PC-3 (cell line): ENCODE measurements at regions of chr1 and their contacts with region 1.

Region 1: GRCh38 chr1:203625628-203626019 is 1.0 kb upstream of the ATP2B4 start:
- DNase-seq: peak; percentile 73
- ATAC-seq: peak; percentile 44
- H3K4me3 ChIP-seq: no peak overlapping the region
- H3K27ac ChIP-seq: peak overlapping the region; percentile 61
- H3K4me1 ChIP-seq: peaks cover 27% of the 10 kb centered on the region
- H3K27me3 ChIP-seq: no peaks in the 10 kb centered on the region
- CTCF ChIP-seq: peak; percentile 64

Region 2: GRCh38 chr1:202661123-202661845 is 964.3 kb before region 1 on chr1:
- CTCF ChIA-PET with region 1: no interaction called
- POLR2A ChIA-PET with region 1: no interaction called
- intact Hi-C with region 1: no loop called
- DNase-seq: peak; percentile 30
- ATAC-seq: peak; percentile 46; the same call in 1 of the 2 replicates
- H3K4me3 ChIP-seq: no peak overlapping the region
- H3K27ac ChIP-seq: no peak overlapping the region
- H3K4me1 ChIP-seq: no peaks in the 10 kb centered on the region
- H3K27me3 ChIP-seq: no peaks in the 10 kb centered on the region
- CTCF ChIP-seq: peak; percentile 41

Region 3: GRCh38 chr1:203512830-203513611 is 112.6 kb before region 1 on chr1:
- CTCF ChIA-PET with region 1: interaction called, 3 read pairs
- POLR2A ChIA-PET with region 1: interaction called, 4 read pairs
- intact Hi-C with region 1: loop called (anchors 2 kb)
- DNase-seq: peak; percentile 98
- ATAC-seq: peak; percentile 76
- H3K4me3 ChIP-seq: peak overlapping the region; percentile 34
- H3K27ac ChIP-seq: peak overlapping the region; percentile 99
- H3K4me1 ChIP-seq: peaks cover 52% of the 10 kb centered on the region
- H3K27me3 ChIP-seq: no peaks in the 10 kb centered on the region
- CTCF ChIP-seq: no peak

Region 4: GRCh38 chr1:203572134-203572625 is 53.4 kb before region 1 on chr1:
- CTCF ChIA-PET with region 1: no interaction called
- POLR2A ChIA-PET with region 1: no interaction called
- intact Hi-C with region 1: no loop called
- DNase-seq: no peak
- ATAC-seq: no peak
- H3K4me3 ChIP-seq: no peak overlapping the region
- H3K27ac ChIP-seq: no peak overlapping the region
- H3K4me1 ChIP-seq: peaks cover 12% of the 10 kb centered on the region
- H3K27me3 ChIP-seq: no peaks in the 10 kb centered on the region
- CTCF ChIP-seq: no peak

Region 5: DNA sequence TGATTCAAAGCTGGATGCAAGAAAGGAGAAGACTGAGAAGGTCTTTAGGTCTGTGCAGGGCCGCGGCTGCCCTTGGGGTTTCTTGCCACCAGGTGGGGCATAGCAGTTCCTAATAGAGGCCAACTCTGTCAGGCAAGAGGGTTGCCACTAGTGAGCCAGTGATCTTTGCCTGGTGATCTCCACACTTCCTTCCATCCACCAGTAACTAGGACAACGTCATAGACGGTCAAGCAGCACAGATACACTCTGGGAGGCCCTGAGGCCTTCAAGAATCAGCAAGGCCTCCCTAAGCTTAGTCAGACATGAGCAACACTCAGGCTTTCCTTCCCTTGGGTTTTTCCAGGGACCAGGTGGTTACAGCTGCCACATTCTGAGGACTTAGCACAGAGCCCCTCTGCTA is 31.9 kb before region 1 on chr1:
- CTCF ChIA-PET with region 1: interaction called, 10 read pairs
- POLR2A ChIA-PET with region 1: no interaction called
- intact Hi-C with region 1: no loop called
- DNase-seq: peak; percentile 69
- ATAC-seq: peak; percentile 25
- H3K4me3 ChIP-seq: no peak overlapping the region
- H3K27ac ChIP-seq: no peak overlapping the region
- H3K4me1 ChIP-seq: peaks cover 36% of the 10 kb centered on the region
- H3K27me3 ChIP-seq: no peaks in the 10 kb centered on the region
- CTCF ChIP-seq: peak; percentile 62

Region 6: GRCh38 chr1:203607533-203607873 is 18.1 kb before region 1 on chr1:
- CTCF ChIA-PET with region 1: interaction called, 5 read pairs
- POLR2A ChIA-PET with region 1: interaction called, 40 read pairs
- intact Hi-C with region 1: loop called (anchors 2 kb)
- DNase-seq: no peak
- ATAC-seq: no peak
- H3K4me3 ChIP-seq: no peak overlapping the region
- H3K27ac ChIP-seq: peak overlapping the region; percentile 61
- H3K4me1 ChIP-seq: peaks cover 19% of the 10 kb centered on the region
- H3K27me3 ChIP-seq: no peaks in the 10 kb centered on the region
- CTCF ChIP-seq: no peak

Region 7: DNA sequence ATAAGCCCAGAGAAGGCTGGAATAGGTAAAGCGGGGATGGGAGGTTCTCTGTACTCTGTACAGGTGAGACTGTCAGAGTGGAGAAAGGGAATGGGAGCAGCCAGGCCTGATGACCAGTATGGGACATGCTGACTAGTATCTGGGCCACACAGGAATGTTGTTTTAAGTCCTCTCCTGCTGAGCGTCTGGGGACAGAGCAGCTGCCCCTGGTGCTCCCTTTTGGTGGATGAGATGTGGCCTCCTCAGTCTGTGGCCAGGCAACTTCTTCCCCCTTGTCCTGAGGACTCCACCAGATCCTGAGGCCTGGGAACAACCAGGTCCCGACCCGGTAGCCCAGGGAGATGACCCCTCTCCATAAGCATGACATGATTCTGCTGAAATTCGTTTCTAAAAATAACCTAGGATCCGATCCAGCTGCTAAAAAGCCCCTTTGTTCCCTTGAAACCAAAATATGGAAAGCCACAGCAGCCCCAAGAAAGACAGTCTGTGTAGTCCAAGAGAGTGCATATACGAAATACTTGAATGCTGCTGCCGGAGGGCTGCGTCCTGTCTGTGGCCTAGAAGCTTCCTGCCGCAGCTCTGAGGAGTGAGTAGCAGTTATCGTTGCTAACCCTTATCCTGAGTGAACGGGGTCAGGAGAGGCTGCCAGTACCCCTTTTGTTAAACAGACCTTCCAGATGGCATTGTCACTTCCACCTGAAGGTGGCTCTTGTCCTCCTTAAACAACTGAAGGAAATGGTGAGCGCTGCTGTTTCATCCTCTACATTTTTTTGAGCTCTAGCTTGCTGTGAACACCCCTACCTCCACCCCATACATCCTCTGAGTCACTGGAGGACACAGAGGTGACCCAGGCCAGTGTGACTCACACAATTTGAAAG is 48.2 kb after region 1 on chr1:
- CTCF ChIA-PET with region 1: interaction called, 18 read pairs
- POLR2A ChIA-PET with region 1: interaction called, 4 read pairs
- intact Hi-C with region 1: loop called (anchors 5 kb)
- DNase-seq: peak; percentile 98
- ATAC-seq: peak; percentile 91
- H3K4me3 ChIP-seq: peak overlapping the region; percentile 6; the same call in 1 of the 2 replicates
- H3K27ac ChIP-seq: peak overlapping the region; percentile 87
- H3K4me1 ChIP-seq: peaks cover 49% of the 10 kb centered on the region
- H3K27me3 ChIP-seq: no peaks in the 10 kb centered on the region
- CTCF ChIP-seq: peak; percentile 70

Region 8: GRCh38 chr1:203702130-203702577 is 76.5 kb after region 1 on chr1:
- CTCF ChIA-PET with region 1: interaction called, 11 read pairs
- POLR2A ChIA-PET with region 1: no interaction called
- intact Hi-C with region 1: loop called (anchors 1 kb)
- DNase-seq: peak; percentile 82
- ATAC-seq: peak; percentile 91
- H3K4me3 ChIP-seq: no peak overlapping the region
- H3K27ac ChIP-seq: no peak overlapping the region
- H3K4me1 ChIP-seq: no peaks in the 10 kb centered on the region
- H3K27me3 ChIP-seq: no peaks in the 10 kb centered on the region
- CTCF ChIP-seq: peak; percentile 100